ENCODE measurements at regions of chr14 and their contacts with region 1.

Region 1: GRCh38 chr14:102694530-102695166 is 82.6 kb upstream of the TRAF3 start:
- DNase-seq: peak; percentile 67
- H3K4me3 Mint-ChIP-seq: no peak overlapping the region
- H3K27ac Mint-ChIP-seq: no peak overlapping the region
- H3K4me1 Mint-ChIP-seq: peaks cover 18% of the 10 kb centered on the region
- H3K27me3 Mint-ChIP-seq: no peaks in the 10 kb centered on the region

Region 2: DNA sequence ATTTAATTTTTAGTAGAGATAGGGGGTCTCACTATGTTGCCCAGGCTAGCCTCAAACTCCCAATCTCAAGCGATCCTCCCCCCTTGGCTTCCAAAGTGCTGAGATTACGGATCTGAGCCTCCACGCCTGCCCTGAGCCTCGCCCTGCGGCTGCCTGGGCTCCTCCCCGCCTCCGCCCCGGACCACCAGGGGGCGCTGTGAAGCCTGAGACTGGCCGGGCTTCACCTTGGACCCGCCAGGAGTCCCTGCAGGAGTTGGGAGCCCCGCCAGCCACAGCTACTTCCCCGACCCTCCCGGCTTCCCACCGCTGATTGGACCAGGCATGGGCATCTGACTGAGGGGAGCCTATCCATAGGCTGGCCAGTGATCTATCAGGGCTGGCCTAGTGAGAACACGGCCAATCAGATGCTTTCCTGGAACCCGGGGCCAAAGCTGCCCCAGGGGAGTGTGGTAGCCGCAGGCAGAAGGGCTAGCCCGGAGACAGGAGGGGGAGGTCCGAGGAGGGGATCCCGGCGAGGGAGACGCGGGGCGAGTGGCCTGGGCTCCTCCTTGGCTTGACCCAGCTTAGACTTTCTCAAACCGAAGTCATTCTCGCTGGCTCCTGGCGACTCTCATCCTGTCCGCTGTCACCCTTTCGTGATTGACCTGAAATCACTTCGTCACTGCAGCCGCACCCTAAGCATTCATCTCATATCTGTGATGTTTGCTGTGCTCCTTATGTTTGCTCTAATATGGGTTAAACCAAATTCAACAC is 170.0 kb before region 1 on chr14:
- CTCF ChIA-PET with region 1: interaction called, 12 read pairs
- DNase-seq: peak; percentile 95
- H3K4me3 Mint-ChIP-seq: peak overlapping the region; percentile 81
- H3K27ac Mint-ChIP-seq: peak overlapping the region; percentile 88
- H3K4me1 Mint-ChIP-seq: peaks cover 36% of the 10 kb centered on the region
- H3K27me3 Mint-ChIP-seq: peaks cover 13% of the 10 kb centered on the region

Region 3: GRCh38 chr14:102659797-102660196 is 34.9 kb before region 1 on chr14:
- CTCF ChIA-PET with region 1: no interaction called
- DNase-seq: no peak
- H3K4me3 Mint-ChIP-seq: no peak overlapping the region
- H3K27ac Mint-ChIP-seq: no peak overlapping the region
- H3K4me1 Mint-ChIP-seq: peaks cover 2% of the 10 kb centered on the region
- H3K27me3 Mint-ChIP-seq: no peaks in the 10 kb centered on the region

Region 4: GRCh38 chr14:102708494-102708893 is 13.8 kb after region 1 on chr14:
- CTCF ChIA-PET with region 1: interaction called, 16 read pairs
- DNase-seq: no peak
- H3K4me3 Mint-ChIP-seq: no peak overlapping the region
- H3K27ac Mint-ChIP-seq: no peak overlapping the region
- H3K4me1 Mint-ChIP-seq: no peaks in the 10 kb centered on the region
- H3K27me3 Mint-ChIP-seq: no peaks in the 10 kb centered on the region

Region 5: GRCh38 chr14:102774391-102775153 is 79.9 kb after region 1 on chr14:
- CTCF ChIA-PET with region 1: interaction called, 27 read pairs
- DNase-seq: peak; percentile 76
- H3K4me3 Mint-ChIP-seq: no peak overlapping the region
- H3K27ac Mint-ChIP-seq: peak overlapping the region; percentile 51
- H3K4me1 Mint-ChIP-seq: peaks cover 40% of the 10 kb centered on the region
- H3K27me3 Mint-ChIP-seq: no peaks in the 10 kb centered on the region

Region 6: DNA sequence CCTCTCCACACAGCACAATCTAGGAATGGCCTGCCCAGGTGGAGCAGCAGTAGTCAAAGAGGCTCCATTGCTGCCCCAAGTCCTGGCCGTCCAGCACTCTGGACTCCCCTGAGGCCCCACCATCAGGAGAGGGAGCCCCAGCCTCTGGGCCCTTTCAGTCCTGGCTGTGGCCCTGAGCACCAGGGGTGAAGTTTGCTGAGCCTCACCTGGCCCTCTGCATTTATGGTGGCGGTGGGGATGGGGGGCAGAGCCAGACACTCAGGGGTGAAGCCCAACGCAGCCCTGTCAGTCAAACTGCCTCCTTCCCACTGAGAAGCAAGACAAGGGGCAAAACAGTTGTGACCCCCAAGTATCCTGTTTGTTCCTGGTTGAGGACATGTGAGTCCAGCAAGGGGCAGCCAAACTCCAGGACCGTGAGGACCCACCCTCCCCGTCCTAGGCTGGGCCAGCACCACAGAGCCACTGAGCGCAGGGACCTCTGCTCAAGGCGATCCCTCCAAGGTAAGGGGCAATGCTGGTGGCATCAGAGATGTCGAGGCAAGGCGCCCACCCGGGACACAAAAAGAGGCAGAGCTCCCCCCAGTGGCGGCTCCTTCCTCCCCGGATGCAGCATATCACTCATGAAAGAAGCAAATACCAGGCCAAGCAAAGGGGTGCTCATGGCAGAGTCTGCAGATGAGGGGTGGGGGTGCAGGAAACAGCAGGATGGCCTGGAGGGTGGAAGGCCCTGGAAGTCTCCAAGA is 223.0 kb after region 1 on chr14:
- CTCF ChIA-PET with region 1: interaction called, 22 read pairs
- DNase-seq: peak; percentile 76
- H3K4me3 Mint-ChIP-seq: no peak overlapping the region
- H3K27ac Mint-ChIP-seq: no peak overlapping the region
- H3K4me1 Mint-ChIP-seq: no peaks in the 10 kb centered on the region
- H3K27me3 Mint-ChIP-seq: no peaks in the 10 kb centered on the region

Measured in activated naive CD4-positive, alpha-beta T cell treated with anti-CD3 and anti-CD28 coated beads, Interleukin-2, amount 10 ng/mL, durations not matched to agents 7 days and 5 days (primary cell).